CD4-positive, alpha-beta T cell (primary cell): ENCODE measurements at regions of chr19 and their contacts with region 1.

Region 1: GRCh38 chr19:9674663-9675357 is at the start of gene ZNF562:
- DNase-seq: peak; percentile 64 to 89 (median 73)
- ATAC-seq: peak; percentile 88
- H3K4me3 ChIP-seq: peak within 1 kb of the TSS; percentile 92
- H3K4me3 Mint-ChIP-seq: peak within 1 kb of the TSS; percentile 99
- H3K27ac ChIP-seq: peak within 1 kb of the TSS; percentile 81 to 83
- H3K27ac Mint-ChIP-seq: peak within 1 kb of the TSS; percentile 98
- H3K4me1 ChIP-seq: peaks cover 13% of the 10 kb centered on the region
- H3K4me1 Mint-ChIP-seq: peaks cover 23% of the 10 kb centered on the region
- H3K27me3 ChIP-seq: no peaks in the 10 kb centered on the region
- H3K27me3 Mint-ChIP-seq: no peaks in the 10 kb centered on the region
- CTCF ChIP-seq: no peak
- total RNA-seq, gene ZNF562: 12.8 to 13.3 TPM

Region 2: DNA sequence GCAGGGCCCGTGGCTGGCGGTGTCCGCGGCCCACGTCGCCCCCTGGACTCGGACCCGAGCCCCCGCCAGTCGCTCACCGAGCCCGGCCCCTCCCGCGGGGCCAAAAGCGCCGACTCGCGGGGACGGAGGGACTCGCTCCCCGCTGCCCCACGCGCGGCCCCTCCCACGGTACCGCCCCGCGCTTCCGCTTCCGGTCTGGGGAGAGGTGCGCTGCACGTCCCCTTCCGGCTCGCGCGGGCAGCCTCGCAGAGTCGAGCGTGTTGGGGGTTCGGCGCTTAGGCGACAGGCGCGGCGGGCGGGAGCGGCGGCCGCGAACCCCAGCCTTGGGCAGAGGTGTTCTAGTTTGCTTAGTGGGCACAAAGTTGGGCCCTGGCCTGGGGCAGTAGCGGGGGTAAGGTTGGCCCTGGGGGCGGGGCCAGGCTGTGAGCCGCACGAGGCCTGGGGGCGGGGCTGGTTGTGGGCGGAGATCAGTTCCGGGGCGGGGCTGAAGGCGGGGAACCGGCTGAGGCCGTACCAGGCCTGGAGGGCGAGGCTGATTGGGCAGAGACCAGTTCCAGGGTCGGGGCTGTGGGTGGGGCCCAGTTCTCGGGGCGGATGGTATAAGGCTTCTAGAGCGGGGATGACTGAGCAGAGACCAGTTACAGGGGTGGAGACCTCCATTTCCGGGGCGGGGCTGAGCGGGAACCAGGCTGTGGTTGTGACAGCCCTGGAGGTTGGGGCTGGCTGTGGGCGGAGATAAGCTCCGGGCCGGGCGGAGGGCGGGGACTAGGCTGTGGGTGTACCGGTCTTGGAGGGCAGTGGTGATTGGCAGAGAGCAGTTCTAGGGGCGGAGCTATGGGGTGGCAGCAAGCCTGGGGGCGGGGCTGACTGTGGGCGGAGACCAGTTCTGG is 842.4 kb before region 1 on chr19 and contains the starts of genes MBD3L1 and ZNF558:
- CTCF ChIA-PET with region 1: no interaction called
- POLR2A ChIA-PET with region 1: no interaction called
- intact Hi-C with region 1: loop called in 1 of 2 experiments (anchors 10 kb)
- DNase-seq: peak; percentile 95 to 100 (median 99)
- ATAC-seq: peak; percentile 88
- H3K4me3 ChIP-seq: peak within 1 kb of the TSS; percentile 90
- H3K4me3 Mint-ChIP-seq: peak within 1 kb of the TSS; percentile 97
- H3K27ac ChIP-seq: peak within 1 kb of the TSS; percentile 89 to 92
- H3K27ac Mint-ChIP-seq: peak within 1 kb of the TSS; percentile 95
- H3K4me1 ChIP-seq: peaks cover 15% of the 10 kb centered on the region
- H3K4me1 Mint-ChIP-seq: peaks cover 31% of the 10 kb centered on the region
- H3K27me3 ChIP-seq: no peaks in the 10 kb centered on the region
- H3K27me3 Mint-ChIP-seq: no peaks in the 10 kb centered on the region
- CTCF ChIP-seq: peak; percentile 48
- total RNA-seq, gene MBD3L1: not detected
- total RNA-seq, gene ZNF558: 22.2 to 23.3 TPM

Region 3: DNA sequence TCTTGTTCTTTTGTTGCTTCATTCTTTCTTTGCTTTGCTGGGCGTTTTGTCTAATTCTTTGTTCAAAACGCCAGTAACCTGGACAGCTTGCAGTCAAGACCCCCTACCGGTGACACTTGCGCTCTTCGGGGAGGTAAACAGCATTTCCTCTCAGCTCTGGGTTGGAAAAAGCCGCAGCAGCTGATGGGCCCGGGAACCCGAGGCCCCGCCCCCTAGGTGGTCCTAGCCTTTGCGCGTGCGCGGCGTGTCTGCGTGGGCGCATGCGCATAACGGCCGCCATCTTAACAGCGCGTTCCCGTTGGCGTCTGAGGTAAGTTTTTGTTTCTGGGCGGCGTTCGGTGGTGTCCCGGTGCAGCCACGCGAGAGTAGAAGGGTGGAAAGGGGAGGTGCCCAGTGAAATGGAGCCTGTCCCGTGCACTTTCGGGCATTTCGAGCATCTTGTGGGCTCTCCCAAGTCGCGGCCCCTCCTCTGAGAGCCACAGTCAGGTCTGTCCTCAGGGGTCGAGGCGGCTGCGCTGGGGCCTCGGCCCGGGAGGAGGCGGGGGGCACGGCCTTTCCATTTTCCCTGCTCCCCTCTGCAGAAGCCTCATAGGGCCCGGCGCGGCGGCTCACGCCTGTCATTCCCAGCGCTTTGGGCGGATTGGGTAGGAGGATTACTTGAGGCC is 350.8 kb before region 1 on chr19 and contains the start of gene ZNF559:
- CTCF ChIA-PET with region 1: no interaction called
- POLR2A ChIA-PET with region 1: no interaction called
- intact Hi-C with region 1: loop called in 1 of 2 experiments (anchors 10 kb)
- DNase-seq: peak; percentile 94 to 98 (median 97)
- ATAC-seq: peak; percentile 97
- H3K4me3 ChIP-seq: peak within 1 kb of the TSS; percentile 87
- H3K4me3 Mint-ChIP-seq: peak within 1 kb of the TSS; percentile 96
- H3K27ac ChIP-seq: peak within 1 kb of the TSS; percentile 80 to 83
- H3K27ac Mint-ChIP-seq: peak within 1 kb of the TSS; percentile 90
- H3K4me1 ChIP-seq: peaks cover 25% of the 10 kb centered on the region
- H3K4me1 Mint-ChIP-seq: peaks cover 33% of the 10 kb centered on the region
- H3K27me3 ChIP-seq: no peaks in the 10 kb centered on the region
- H3K27me3 Mint-ChIP-seq: no peaks in the 10 kb centered on the region
- CTCF ChIP-seq: peak; percentile 65
- total RNA-seq, gene ZNF559: 4.7 to 6.5 TPM

Region 4: GRCh38 chr19:9584073-9584833 is 90.6 kb before region 1 on chr19 and contains the start of gene ZNF121:
- CTCF ChIA-PET with region 1: no interaction called
- POLR2A ChIA-PET with region 1: no interaction called
- intact Hi-C with region 1: loop called (anchors 10 kb)
- DNase-seq: peak; percentile 53 to 88 (median 68)
- ATAC-seq: peak; percentile 70
- H3K4me3 ChIP-seq: peak within 1 kb of the TSS; percentile 82
- H3K4me3 Mint-ChIP-seq: peak within 1 kb of the TSS; percentile 98
- H3K27ac ChIP-seq: peak within 1 kb of the TSS; percentile 92 to 93
- H3K27ac Mint-ChIP-seq: peak within 1 kb of the TSS; percentile 98
- H3K4me1 ChIP-seq: peaks cover 23% of the 10 kb centered on the region
- H3K4me1 Mint-ChIP-seq: peaks cover 36% of the 10 kb centered on the region
- H3K27me3 ChIP-seq: no peaks in the 10 kb centered on the region
- H3K27me3 Mint-ChIP-seq: peaks cover 5% of the 10 kb centered on the region
- CTCF ChIP-seq: no peak
- total RNA-seq, gene ZNF121: 42.0 to 42.1 TPM

Region 5: GRCh38 chr19:9621156-9622037 is 53.4 kb before region 1 on chr19 and contains the start of gene ZNF561:
- CTCF ChIA-PET with region 1: no interaction called
- POLR2A ChIA-PET with region 1: no interaction called
- intact Hi-C with region 1: loop called (anchors 1 to 5 kb)
- DNase-seq: peak; percentile 81 to 96 (median 85)
- ATAC-seq: peak; percentile 90
- H3K4me3 ChIP-seq: peak within 1 kb of the TSS; percentile 77
- H3K4me3 Mint-ChIP-seq: peak within 1 kb of the TSS; percentile 97
- H3K27ac ChIP-seq: peak within 1 kb of the TSS; percentile 93 to 94
- H3K27ac Mint-ChIP-seq: peak within 1 kb of the TSS; percentile 99
- H3K4me1 ChIP-seq: peaks cover 20% of the 10 kb centered on the region
- H3K4me1 Mint-ChIP-seq: peaks cover 25% of the 10 kb centered on the region
- H3K27me3 ChIP-seq: no peaks in the 10 kb centered on the region
- H3K27me3 Mint-ChIP-seq: peaks cover 4% of the 10 kb centered on the region
- CTCF ChIP-seq: no peak
- total RNA-seq, gene ZNF561: 45.1 to 46.2 TPM

Region 6: DNA sequence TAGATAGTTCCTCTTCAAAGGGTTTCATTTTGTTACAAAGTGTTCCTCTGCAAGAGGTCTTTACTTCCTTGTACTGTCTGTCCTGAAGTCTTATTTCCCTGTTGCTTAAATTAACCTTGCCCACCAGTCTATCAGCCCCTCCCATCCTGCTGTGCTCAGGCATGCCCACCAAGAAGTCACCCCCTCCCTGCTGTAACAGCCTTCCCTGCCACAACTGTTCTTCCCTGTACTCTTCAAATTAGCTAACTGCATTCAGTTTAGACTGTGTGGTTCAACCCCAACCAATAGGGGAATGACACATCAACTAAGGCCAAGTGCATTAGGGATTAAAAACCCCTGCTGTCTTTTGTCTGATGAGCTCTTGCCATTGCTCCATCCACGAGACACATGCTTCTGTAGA is 34.5 kb after region 1 on chr19:
- CTCF ChIA-PET with region 1: no interaction called
- POLR2A ChIA-PET with region 1: no interaction called
- intact Hi-C with region 1: no loop called
- DNase-seq: peak in 1 of 14 experiments; percentile 11
- ATAC-seq: no peak
- H3K4me3 ChIP-seq: no peak overlapping the region
- H3K4me3 Mint-ChIP-seq: no peak overlapping the region
- H3K27ac ChIP-seq: no peak overlapping the region
- H3K27ac Mint-ChIP-seq: no peak overlapping the region
- H3K4me1 ChIP-seq: no peaks in the 10 kb centered on the region
- H3K4me1 Mint-ChIP-seq: no peaks in the 10 kb centered on the region
- H3K27me3 ChIP-seq: no peaks in the 10 kb centered on the region
- H3K27me3 Mint-ChIP-seq: no peaks in the 10 kb centered on the region
- CTCF ChIP-seq: no peak

Region 7: GRCh38 chr19:9741476-9742171 is 66.8 kb after region 1 on chr19:
- CTCF ChIA-PET with region 1: no interaction called
- POLR2A ChIA-PET with region 1: no interaction called
- intact Hi-C with region 1: loop called in 1 of 2 experiments (anchors 10 kb)
- DNase-seq: no peak
- ATAC-seq: no peak
- H3K4me3 ChIP-seq: no peak overlapping the region
- H3K4me3 Mint-ChIP-seq: no peak overlapping the region
- H3K27ac ChIP-seq: no peak overlapping the region
- H3K27ac Mint-ChIP-seq: no peak overlapping the region
- H3K4me1 ChIP-seq: no peaks in the 10 kb centered on the region
- H3K4me1 Mint-ChIP-seq: no peaks in the 10 kb centered on the region
- H3K27me3 ChIP-seq: no peaks in the 10 kb centered on the region
- H3K27me3 Mint-ChIP-seq: no peaks in the 10 kb centered on the region
- CTCF ChIP-seq: no peak

Region 8: DNA sequence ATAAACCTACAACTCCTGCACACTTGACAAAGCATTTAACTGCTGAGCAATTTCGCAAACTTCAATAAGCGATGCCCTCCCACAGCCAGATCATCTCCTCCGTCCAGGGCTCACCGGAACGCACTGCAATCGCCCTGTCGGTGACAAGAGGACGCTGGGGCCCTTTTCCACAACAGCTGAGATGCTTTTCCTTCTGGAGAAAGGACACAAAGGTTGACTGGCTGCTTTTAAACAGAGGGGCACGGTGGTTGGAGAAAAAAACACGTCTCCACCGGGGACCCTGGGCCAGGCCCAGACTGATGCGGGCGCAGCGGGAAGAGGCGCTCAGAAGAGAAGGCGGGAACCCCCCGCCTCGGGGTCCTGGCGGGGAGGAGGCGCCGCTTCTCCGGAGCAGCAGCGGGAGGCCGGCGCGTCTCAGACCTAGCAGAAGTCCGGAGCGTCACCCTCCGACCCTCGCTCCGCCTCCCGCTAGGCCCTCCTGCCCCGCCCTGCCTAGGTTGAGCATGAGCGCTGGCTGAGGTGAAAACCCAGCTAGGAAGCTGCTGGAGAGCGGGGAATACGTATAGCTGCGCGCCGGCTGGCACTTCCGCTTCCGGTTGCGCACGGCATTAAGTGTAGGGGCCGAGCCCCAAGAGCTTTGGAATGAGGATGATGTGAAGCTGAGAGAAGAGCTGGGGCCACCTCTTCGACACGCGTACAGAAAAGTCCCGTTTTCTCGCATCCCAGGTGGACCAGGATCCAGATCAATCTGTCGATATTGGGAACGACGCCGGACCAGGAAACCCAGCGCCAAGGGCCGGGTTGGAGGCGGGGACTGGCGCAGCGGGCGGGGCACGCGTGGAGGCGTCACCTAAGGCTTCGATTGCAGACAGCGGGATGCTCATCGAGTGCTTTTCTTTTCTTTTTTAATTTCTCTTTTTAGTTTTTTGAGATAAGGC is 93.6 kb after region 1 on chr19 and contains the start of gene ZNF846:
- CTCF ChIA-PET with region 1: no interaction called
- POLR2A ChIA-PET with region 1: interaction called, 5 read pairs
- intact Hi-C with region 1: loop called (anchors 1 kb)
- DNase-seq: peak; percentile 88 to 96 (median 90)
- ATAC-seq: peak; percentile 96
- H3K4me3 ChIP-seq: peak within 1 kb of the TSS; percentile 69
- H3K4me3 Mint-ChIP-seq: peak within 1 kb of the TSS; percentile 94
- H3K27ac ChIP-seq: peak within 1 kb of the TSS; percentile 93 to 94
- H3K27ac Mint-ChIP-seq: peak within 1 kb of the TSS; percentile 97
- H3K4me1 ChIP-seq: peaks cover 23% of the 10 kb centered on the region
- H3K4me1 Mint-ChIP-seq: peaks cover 12% of the 10 kb centered on the region
- H3K27me3 ChIP-seq: no peaks in the 10 kb centered on the region
- H3K27me3 Mint-ChIP-seq: no peaks in the 10 kb centered on the region
- CTCF ChIP-seq: no peak
- total RNA-seq, gene ZNF846: 7.9 to 8.5 TPM